Posterior cingulate gyrus (tissue), 11 donors: ENCODE measurements at regions of chr20 and their contacts with region 1.

Region 1: GRCh38 chr20:24992487-24993205 is at the start of gene APMAP:
- DNase-seq: peak; percentile 93 to 99 (median 97)

Region 2: GRCh38 chr20:25032478-25033280 is 40.0 kb after region 1 on chr20:
- intact Hi-C with region 1: loop called (anchors 2 kb)
- DNase-seq: peak; percentile 84 to 99 (median 92)

Region 3: GRCh38 chr20:25065625-25066338 is 73.1 kb after region 1 on chr20:
- intact Hi-C with region 1: loop called (anchors 1 kb)
- DNase-seq: peak in 8 of 10 donors; percentile 50 to 94 (median 74)

Region 4: DNA sequence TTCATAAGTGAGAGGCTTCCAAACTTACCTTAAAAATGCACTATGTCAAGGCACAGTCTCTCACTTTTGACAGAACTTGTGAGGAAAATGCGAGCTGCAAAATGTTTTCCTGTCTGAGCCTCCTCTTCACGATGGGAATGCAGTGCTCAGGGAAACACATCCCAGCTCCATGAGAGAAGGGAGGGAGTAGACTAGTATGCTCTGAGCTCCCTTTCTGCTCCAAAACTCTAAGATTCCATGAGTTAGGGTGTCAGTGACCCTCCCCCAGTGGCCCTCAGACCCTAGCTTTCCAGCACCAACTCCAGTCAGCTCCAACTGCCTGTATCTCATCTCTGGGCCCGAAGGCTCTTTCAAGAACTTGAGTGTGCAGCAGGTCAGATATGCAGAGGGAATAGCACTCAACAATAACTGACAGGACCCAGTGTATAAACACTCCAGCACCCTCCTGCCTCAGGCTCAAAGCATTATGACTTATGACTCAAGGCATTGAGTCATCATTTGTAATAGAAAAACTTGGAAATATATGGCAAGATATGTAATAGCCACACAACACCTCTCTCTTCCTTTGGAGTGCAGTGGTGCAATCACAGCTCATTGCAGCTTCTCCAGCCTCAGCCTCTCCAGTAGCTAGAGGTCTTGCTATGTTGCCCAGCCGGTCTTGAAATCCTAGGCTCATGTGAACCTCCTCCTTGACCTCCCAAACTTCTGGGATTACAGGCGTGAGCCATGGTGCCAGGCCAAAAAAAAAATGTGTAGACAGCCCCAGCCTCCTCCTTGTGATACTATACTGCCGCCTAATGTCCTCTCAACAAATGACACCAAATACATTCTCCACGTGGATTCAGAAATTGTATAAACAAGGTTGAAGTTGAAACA is 186.2 kb after region 1 on chr20:
- intact Hi-C with region 1: loop called (anchors 2 kb)
- DNase-seq: peak in 1 of 10 donors; percentile 77

Region 5: GRCh38 chr20:25195014-25195961 is 202.6 kb after region 1 on chr20 and contains the start of gene ENTPD6:
- intact Hi-C with region 1: loop called (anchors 5 kb)
- DNase-seq: peak; percentile 87 to 99 (median 90)

Region 6: GRCh38 chr20:25399037-25399430 is 406.4 kb after region 1 on chr20:
- intact Hi-C with region 1: loop called (anchors 5 kb)
- DNase-seq: peak in 4 of 10 donors; percentile 17 to 77 (median 33)